AG04450 (cell line): ENCODE measurements at regions of chr1 and their contacts with region 1.

Region 1: GRCh38 chr1:224644553-224645154 is 28.5 kb downstream of the CNIH3 start:
- DNase-seq: no peak
- H3K4me3 ChIP-seq: no peak overlapping the region
- H3K27ac ChIP-seq: no peak overlapping the region
- H3K27me3 ChIP-seq: no peaks in the 10 kb centered on the region
- CTCF ChIP-seq: peak; percentile 90

Region 2: DNA sequence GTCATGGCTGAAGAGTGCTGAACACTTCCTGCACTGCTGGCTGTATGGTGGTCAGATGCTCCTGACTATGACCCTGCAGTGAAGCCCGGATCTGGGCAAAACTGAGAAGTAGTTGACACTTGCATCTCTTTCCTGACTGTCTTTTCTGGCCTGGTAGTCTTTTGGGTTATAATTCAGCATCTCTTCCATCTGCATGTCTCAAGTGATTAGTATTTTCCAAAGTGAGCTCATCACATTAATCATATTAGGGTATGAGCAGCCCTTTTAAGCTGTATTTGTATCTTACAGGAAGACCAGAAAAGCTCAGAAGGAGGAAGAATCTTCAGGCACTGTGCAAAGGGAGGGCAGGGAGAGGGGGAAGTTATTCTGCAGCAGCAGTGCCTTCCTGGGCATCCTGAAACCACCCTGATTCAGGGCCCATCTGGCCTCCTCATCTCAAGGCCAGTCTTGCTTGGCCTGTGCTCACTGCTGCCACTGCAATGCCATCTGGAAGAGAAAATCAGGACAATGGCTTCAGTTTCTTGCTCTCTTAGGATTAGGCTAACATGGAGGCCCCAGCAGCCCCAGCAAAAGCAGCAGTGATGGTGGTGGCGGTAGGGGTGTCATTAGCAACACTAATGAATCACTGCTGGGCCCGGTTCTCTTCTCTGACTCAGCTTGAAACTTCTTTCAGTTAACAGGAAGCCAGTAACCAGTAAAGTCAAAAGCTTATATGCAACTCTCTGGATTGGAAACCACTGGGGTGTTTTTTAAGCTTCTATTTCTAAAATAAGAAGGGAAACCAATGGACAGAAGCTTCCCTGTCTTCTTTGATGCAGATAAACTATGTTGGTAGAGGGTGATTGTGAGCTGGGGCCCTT is 146.7 kb before region 1 on chr1:
- CTCF ChIA-PET with region 1: no interaction called
- POLR2A ChIA-PET with region 1: no interaction called
- DNase-seq: no peak
- H3K4me3 ChIP-seq: no peak overlapping the region
- H3K27ac ChIP-seq: peak overlapping the region; percentile 86
- H3K27me3 ChIP-seq: no peaks in the 10 kb centered on the region
- CTCF ChIP-seq: peak; percentile 13; the same call in 1 of the 2 replicates

Region 3: DNA sequence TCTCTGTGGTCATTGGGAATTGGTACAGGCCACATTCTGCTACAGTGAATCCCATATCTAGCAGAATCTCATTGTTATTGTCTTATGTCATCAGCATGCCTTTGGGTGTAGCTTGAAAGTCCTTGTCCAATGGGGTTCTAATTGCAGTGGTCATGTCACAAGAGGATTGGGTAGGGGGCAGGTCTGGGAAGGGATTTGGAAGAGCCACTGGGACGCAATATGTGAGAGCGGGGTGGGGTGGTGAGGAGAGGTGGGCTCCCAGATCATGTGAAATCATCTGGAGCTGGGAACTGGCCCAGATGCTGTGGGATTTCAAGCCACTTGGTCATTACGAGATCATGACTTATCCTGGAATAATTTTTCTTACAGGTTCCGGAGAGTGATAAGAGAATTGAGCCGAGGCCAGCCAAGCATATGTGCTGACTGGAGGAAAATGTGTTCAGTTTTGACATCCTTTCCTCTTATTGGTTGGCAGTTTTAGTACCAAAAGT is 12.2 kb before region 1 on chr1:
- CTCF ChIA-PET with region 1: interaction called, 54 read pairs
- POLR2A ChIA-PET with region 1: no interaction called
- DNase-seq: peak; percentile 59
- H3K4me3 ChIP-seq: no peak overlapping the region
- H3K27ac ChIP-seq: peak overlapping the region; percentile 80
- H3K27me3 ChIP-seq: no peaks in the 10 kb centered on the region
- CTCF ChIP-seq: no peak

Region 4: GRCh38 chr1:224656392-224656791 is 11.7 kb after region 1 on chr1:
- CTCF ChIA-PET with region 1: interaction called, 19 read pairs
- POLR2A ChIA-PET with region 1: no interaction called
- DNase-seq: no peak
- H3K4me3 ChIP-seq: no peak overlapping the region
- H3K27ac ChIP-seq: no peak overlapping the region
- H3K27me3 ChIP-seq: no peaks in the 10 kb centered on the region
- CTCF ChIP-seq: no peak

Region 5: DNA sequence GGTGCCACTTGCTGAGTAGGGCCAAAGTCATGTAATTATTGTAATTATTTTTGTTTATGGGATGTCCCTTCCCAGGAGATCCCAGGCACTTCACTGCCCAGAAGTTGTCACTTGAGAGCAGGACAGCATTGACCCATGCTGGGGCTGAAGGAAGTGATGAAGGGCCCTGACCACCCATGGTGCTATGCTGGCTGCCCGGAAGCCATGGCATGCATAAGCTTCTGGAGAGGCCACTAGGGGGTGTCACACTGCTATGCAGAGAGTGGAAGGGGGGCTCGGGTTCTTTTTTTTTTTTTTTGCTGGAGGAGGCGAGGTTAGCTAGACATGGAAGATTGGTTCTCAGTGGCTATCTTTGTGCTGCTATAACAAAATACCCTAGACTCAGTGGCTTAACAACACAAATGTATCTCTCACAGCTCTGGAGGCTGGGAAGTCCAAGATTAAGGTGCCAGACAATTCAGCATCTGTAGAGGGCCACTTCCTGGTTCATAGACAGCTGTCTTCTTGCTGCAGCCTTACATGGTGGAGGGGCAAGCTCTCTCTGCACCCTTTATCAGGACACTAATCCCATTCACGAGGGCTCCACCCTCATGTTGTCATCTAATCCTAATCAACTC is 56.4 kb after region 1 on chr1:
- CTCF ChIA-PET with region 1: interaction called, 10 read pairs
- POLR2A ChIA-PET with region 1: no interaction called
- DNase-seq: no peak
- H3K4me3 ChIP-seq: no peak overlapping the region
- H3K27ac ChIP-seq: no peak overlapping the region
- H3K27me3 ChIP-seq: no peaks in the 10 kb centered on the region
- CTCF ChIP-seq: peak; percentile 42

Region 6: GRCh38 chr1:224922404-224923164 is 277.9 kb after region 1 on chr1:
- CTCF ChIA-PET with region 1: interaction called, 22 read pairs
- POLR2A ChIA-PET with region 1: no interaction called
- DNase-seq: peak; percentile 1
- H3K4me3 ChIP-seq: no peak overlapping the region
- H3K27ac ChIP-seq: no peak overlapping the region
- H3K27me3 ChIP-seq: no peaks in the 10 kb centered on the region
- CTCF ChIP-seq: peak; percentile 82